ENCODE measurements at regions of chr13 and their contacts with region 1.

Region 1: GRCh38 chr13:64819081-64819480 is 2411.1 kb downstream of the PCDH9 start:
- DNase-seq: no peak
- ATAC-seq: no peak
- H3K4me3 ChIP-seq: no peak overlapping the region
- H3K27ac ChIP-seq: no peak overlapping the region
- H3K4me1 ChIP-seq: peaks cover 6% of the 10 kb centered on the region
- H3K27me3 ChIP-seq: no peaks in the 10 kb centered on the region
- CTCF ChIP-seq: peak; percentile 34; the same call in 1 of the 2 replicates

Region 2: GRCh38 chr13:64551755-64552154 is 267.3 kb before region 1 on chr13:
- CTCF ChIA-PET with region 1: no interaction called
- POLR2A ChIA-PET with region 1: no interaction called
- intact Hi-C with region 1: loop called (anchors 10 kb)
- DNase-seq: peak; percentile 71
- ATAC-seq: peak; percentile 59
- H3K4me3 ChIP-seq: no peak overlapping the region
- H3K27ac ChIP-seq: peak overlapping the region; percentile 59
- H3K4me1 ChIP-seq: peaks cover 11% of the 10 kb centered on the region
- H3K27me3 ChIP-seq: no peaks in the 10 kb centered on the region
- CTCF ChIP-seq: no peak

Region 3: DNA sequence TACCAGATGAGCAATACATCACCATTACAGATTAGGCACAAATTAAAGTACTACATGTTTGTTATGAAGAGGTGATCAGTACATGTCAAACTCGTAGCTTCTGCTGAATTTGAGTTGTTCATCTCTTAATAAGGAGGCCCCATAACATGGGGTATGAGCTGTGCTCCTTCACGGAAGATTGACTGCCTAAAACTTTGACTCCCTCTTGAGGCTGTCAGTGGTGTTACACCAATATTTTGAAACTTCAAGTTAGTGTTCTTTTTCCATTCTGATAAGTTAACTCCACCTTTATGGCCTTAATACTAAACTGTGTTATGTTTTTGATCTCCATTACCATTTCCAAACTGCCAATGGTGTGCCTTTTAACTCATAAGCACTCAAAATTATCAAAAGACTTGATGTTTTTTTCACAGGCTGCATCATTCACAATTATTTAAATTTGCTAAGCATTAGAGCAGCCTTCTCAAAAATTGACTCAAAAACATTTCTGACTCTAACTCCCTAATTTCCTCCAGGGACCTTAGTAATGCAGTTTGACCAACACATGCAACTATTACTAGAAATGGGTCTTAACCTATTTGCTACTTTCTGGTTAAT is 819.6 kb after region 1 on chr13:
- CTCF ChIA-PET with region 1: no interaction called
- POLR2A ChIA-PET with region 1: no interaction called
- intact Hi-C with region 1: loop called (anchors 2 kb)
- DNase-seq: peak; percentile 56
- ATAC-seq: peak; percentile 31; the same call in 1 of the 2 replicates
- H3K4me3 ChIP-seq: no peak overlapping the region
- H3K27ac ChIP-seq: no peak overlapping the region
- H3K4me1 ChIP-seq: no peaks in the 10 kb centered on the region
- H3K27me3 ChIP-seq: no peaks in the 10 kb centered on the region
- CTCF ChIP-seq: peak; percentile 75